CD8-positive, alpha-beta T cell (primary cell): ENCODE measurements at regions of chr1 and their contacts with region 1.

Region 1: DNA sequence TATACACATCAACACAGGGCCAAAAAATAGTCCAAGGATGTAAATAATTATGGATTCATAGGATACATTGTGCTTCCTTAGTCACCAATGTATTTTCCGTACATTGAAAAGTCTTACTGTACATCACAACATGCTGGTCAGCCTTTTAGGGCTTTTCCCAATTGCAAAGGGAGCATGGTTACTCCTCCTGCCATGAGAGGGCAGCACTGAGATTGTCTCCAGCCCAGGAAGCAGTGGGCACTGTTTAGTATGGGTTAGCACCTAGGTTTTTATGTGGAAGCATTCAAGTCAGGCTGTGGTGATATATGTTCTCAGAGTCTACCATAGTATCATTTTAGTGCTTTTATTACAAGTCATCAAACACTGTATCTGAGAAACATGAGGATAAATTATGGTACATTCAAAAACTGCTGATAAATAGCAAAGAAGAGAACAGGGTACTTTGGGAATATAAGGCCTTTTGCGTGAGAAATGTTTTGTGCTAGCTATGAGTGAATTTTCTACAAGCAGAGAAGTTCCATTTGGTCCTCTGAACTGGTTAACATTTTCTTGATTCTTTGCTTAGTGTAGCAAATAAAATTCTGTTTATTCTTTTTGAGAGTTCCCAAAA is 34.0 kb downstream of the ST6GALNAC5 start:
- DNase-seq: peak in 6 of 9 experiments; percentile 2 to 59 (median 25)
- ATAC-seq: no peak
- H3K4me3 ChIP-seq: no peak overlapping the region
- H3K4me3 Mint-ChIP-seq: no peak overlapping the region
- H3K27ac ChIP-seq: no peak overlapping the region
- H3K27ac Mint-ChIP-seq: no peak overlapping the region
- H3K4me1 ChIP-seq: no peaks in the 10 kb centered on the region
- H3K4me1 Mint-ChIP-seq: no peaks in the 10 kb centered on the region
- H3K27me3 ChIP-seq: no peaks in the 10 kb centered on the region
- H3K27me3 Mint-ChIP-seq: peaks cover 4% of the 10 kb centered on the region
- CTCF ChIP-seq: peak; percentile 52

Region 2: GRCh38 chr1:76659171-76659940 is 241.9 kb before region 1 on chr1:
- CTCF ChIA-PET with region 1: no interaction called
- POLR2A ChIA-PET with region 1: no interaction called
- intact Hi-C with region 1: loop called in 1 of 2 experiments (anchors 5 kb)
- DNase-seq: no peak
- ATAC-seq: no peak
- H3K4me3 ChIP-seq: no peak overlapping the region
- H3K4me3 Mint-ChIP-seq: no peak overlapping the region
- H3K27ac ChIP-seq: no peak overlapping the region
- H3K27ac Mint-ChIP-seq: no peak overlapping the region
- H3K4me1 ChIP-seq: no peaks in the 10 kb centered on the region
- H3K4me1 Mint-ChIP-seq: no peaks in the 10 kb centered on the region
- H3K27me3 ChIP-seq: no peaks in the 10 kb centered on the region
- H3K27me3 Mint-ChIP-seq: peaks cover 5% of the 10 kb centered on the region
- CTCF ChIP-seq: no peak

Region 3: DNA sequence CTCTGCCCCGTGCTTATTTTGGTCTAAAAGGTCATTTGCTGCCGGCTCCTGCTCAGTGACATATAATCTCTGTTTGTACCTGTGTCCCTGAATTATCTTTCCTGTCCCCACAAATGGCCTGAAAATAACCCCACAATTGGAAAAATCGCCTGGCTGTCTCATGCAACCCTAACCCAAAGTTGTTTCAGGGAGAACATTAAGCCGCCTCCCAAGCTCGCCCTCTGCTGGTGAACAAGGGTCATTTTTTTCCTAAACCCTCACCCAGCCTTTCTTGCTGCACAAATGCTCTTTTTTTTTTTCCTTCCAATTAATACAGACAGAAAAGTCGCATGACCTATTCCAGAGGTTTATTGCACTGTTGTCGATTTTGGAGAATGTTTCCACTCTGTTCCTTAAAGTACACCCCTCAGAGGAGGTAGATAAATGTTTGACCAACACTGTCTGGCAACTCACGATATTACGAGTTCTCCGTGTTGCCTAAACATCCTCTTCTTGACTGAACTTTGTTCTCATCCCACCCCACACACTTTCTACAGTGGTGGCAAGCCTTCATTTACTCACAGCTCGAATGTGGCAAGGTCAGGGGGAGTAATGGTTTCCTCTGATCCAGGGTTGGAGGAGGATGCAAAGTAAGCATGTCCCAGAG is 632.5 kb after region 1 on chr1:
- CTCF ChIA-PET with region 1: no interaction called
- POLR2A ChIA-PET with region 1: no interaction called
- intact Hi-C with region 1: loop called in 1 of 2 experiments (anchors 10 kb)
- DNase-seq: peak; percentile 26 to 77 (median 61)
- ATAC-seq: peak; percentile 62
- H3K4me3 ChIP-seq: no peak overlapping the region
- H3K4me3 Mint-ChIP-seq: peak overlapping the region; percentile 38
- H3K27ac ChIP-seq: no peak overlapping the region
- H3K27ac Mint-ChIP-seq: peak overlapping the region; percentile 21
- H3K4me1 ChIP-seq: peaks cover 9% of the 10 kb centered on the region
- H3K4me1 Mint-ChIP-seq: peaks cover 7% of the 10 kb centered on the region
- H3K27me3 ChIP-seq: no peaks in the 10 kb centered on the region
- H3K27me3 Mint-ChIP-seq: no peaks in the 10 kb centered on the region
- CTCF ChIP-seq: peak; percentile 91

Region 4: GRCh38 chr1:77900687-77901293 is 999.5 kb after region 1 on chr1:
- CTCF ChIA-PET with region 1: no interaction called
- POLR2A ChIA-PET with region 1: no interaction called
- intact Hi-C with region 1: loop called in 1 of 2 experiments (anchors 10 kb)
- DNase-seq: peak in 2 of 9 experiments; percentile 22 to 44
- ATAC-seq: peak; percentile 34
- H3K4me3 ChIP-seq: no peak overlapping the region
- H3K4me3 Mint-ChIP-seq: no peak overlapping the region
- H3K27ac ChIP-seq: no peak overlapping the region
- H3K27ac Mint-ChIP-seq: no peak overlapping the region
- H3K4me1 ChIP-seq: no peaks in the 10 kb centered on the region
- H3K4me1 Mint-ChIP-seq: no peaks in the 10 kb centered on the region
- H3K27me3 ChIP-seq: no peaks in the 10 kb centered on the region
- H3K27me3 Mint-ChIP-seq: no peaks in the 10 kb centered on the region
- CTCF ChIP-seq: peak; percentile 41